Activated B cell treated with CpG ODN at 0.5 μM for 24 hours (primary cell): ENCODE measurements at regions of chr17 and their contacts with region 1.

Region 1: GRCh38 chr17:49694847-49695683 is 12.7 kb downstream of the SLC35B1 start:
- DNase-seq: peak; percentile 68
- ATAC-seq: peak; percentile 86
- H3K4me3 Mint-ChIP-seq: no peak overlapping the region
- H3K27ac Mint-ChIP-seq: no peak overlapping the region
- H3K4me1 Mint-ChIP-seq: peaks cover 18% of the 10 kb centered on the region
- H3K27me3 Mint-ChIP-seq: no peaks in the 10 kb centered on the region
- CTCF ChIP-seq: peak; percentile 44

Region 2: DNA sequence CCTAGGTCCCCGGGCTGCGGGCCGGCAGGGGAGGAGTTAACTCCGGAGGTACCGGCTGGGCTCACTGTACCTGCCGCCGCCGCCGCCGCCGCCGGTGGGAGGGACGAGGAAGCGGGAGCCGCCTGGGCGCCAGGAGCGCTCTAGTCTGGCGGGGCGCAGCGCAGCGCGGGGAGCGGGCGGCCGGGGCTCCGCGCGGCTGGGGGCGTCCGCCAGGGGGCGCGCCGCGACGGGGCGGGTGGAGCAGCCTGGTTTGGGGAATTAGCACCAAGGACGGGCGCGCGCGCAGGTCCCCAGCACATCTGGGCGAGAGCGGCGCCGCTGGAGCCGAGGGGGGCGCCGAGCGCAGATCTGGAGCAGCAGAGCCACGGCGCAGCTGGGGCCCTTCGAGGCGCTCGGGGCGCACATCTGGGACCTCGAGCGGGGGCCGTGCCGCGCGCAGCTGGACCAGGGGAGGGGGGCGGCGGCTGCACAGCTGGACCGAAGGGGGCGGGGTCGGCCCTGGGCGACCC is 119.4 kb before region 1 on chr17 and contains the start of gene NXPH3:
- CTCF ChIA-PET with region 1: interaction called, 55 read pairs
- POLR2A ChIA-PET with region 1: interaction called, 5 read pairs
- intact Hi-C with region 1: loop called (anchors 1 kb)
- DNase-seq: peak; percentile 56
- ATAC-seq: peak; percentile 74
- H3K4me3 Mint-ChIP-seq: peak within 1 kb of the TSS; percentile 77
- H3K27ac Mint-ChIP-seq: no peak within 1 kb of the TSS
- H3K4me1 Mint-ChIP-seq: peaks cover 11% of the 10 kb centered on the region
- H3K27me3 Mint-ChIP-seq: peaks cover 42% of the 10 kb centered on the region
- CTCF ChIP-seq: no peak
- total RNA-seq, gene NXPH3: not detected in 2 replicates